ENCODE measurements at regions of chr11 and their contacts with region 1.

Region 1: GRCh38 chr11:46045811-46046210 is 75.4 kb downstream of the PHF21A start:
- DNase-seq: no peak
- H3K4me3 ChIP-seq: no peak overlapping the region
- H3K27ac ChIP-seq: no peak overlapping the region
- H3K4me1 ChIP-seq: peaks cover 20 to 36% of the 10 kb centered on the region in 2 donors
- H3K27me3 ChIP-seq: no peaks in the 10 kb centered on the region
- CTCF ChIP-seq: no peak
- POLR2A ChIP-seq: no peak

Region 2: GRCh38 chr11:45145379-45146071 is 900.3 kb before region 1 on chr11:
- intact Hi-C with region 1: no loop called
- DNase-seq: peak; percentile 53 to 89 (median 70)
- H3K4me3 ChIP-seq: peak overlapping the region in 3 of 4 donors; percentile 50 to 90 (median 69)
- H3K27ac ChIP-seq: peak overlapping the region in 3 of 5 donors; percentile 97 to 100 (median 97)
- H3K4me1 ChIP-seq: peaks cover 15 to 22% of the 10 kb centered on the region in 2 donors
- H3K27me3 ChIP-seq: no peaks in the 10 kb centered on the region
- CTCF ChIP-seq: no peak
- POLR2A ChIP-seq: no peak

Region 3: GRCh38 chr11:46112961-46113617 is 67.3 kb after region 1 on chr11:
- intact Hi-C with region 1: loop called in 1 of 2 experiments (anchors 2 kb)
- DNase-seq: peak in 1 of 7 donors; percentile 34
- H3K4me3 ChIP-seq: no peak overlapping the region
- H3K27ac ChIP-seq: no peak overlapping the region
- H3K4me1 ChIP-seq: peaks cover 22 to 67% of the 10 kb centered on the region in 2 donors
- H3K27me3 ChIP-seq: no peaks in the 10 kb centered on the region
- CTCF ChIP-seq: no peak
- POLR2A ChIP-seq: no peak

Region 4: DNA sequence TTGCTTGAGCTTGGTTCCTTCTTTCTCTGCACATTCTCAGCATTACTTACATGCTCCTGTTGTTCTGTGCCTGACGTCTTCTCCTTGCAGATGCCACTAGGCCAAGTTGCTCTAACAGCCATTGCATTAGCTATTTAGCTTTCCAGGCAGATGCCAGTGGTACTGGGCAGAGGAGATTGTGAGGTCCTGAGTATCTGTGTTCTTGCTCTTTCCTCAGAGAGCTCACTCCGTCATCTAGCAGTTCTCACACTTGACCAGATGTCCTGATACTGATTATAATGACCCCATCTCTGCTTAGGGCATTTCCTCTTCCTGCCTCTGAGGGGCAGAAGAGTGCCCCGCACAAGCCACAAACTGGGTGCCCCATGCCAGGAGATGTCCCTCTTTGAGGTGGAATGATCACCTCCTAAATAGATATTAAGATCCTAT is 623.9 kb after region 1 on chr11:
- intact Hi-C with region 1: no loop called
- DNase-seq: peak in 1 of 7 donors; percentile 30
- H3K4me3 ChIP-seq: no peak overlapping the region
- H3K27ac ChIP-seq: no peak overlapping the region
- H3K4me1 ChIP-seq: peaks cover under 1 to 26% of the 10 kb centered on the region in 2 donors
- H3K27me3 ChIP-seq: no peaks in the 10 kb centered on the region
- CTCF ChIP-seq: peak in 5 of 6 experiments; percentile 9 to 37 (median 31)
- POLR2A ChIP-seq: no peak